ENCODE measurements at regions of chr6 and their contacts with region 1.

Region 1: GRCh38 chr6:150016324-150017185 is 8.8 kb downstream of the RAET1L start:
- DNase-seq: peak; percentile 70 to 83 (median 80)
- ATAC-seq: peak; percentile 91
- H3K4me3 ChIP-seq: no peak overlapping the region
- H3K27ac ChIP-seq: no peak overlapping the region
- H3K4me1 ChIP-seq: peaks cover 9% of the 10 kb centered on the region
- H3K27me3 ChIP-seq: peaks cover 0 to 19% of the 10 kb centered on the region in 2 donors
- CTCF ChIP-seq: peak; percentile 43 to 87 (median 78)
- POLR2A ChIP-seq: no peak

Region 2: GRCh38 chr6:149903938-149904611 is 112.5 kb before region 1 on chr6:
- intact Hi-C with region 1: no loop called
- DNase-seq: no peak
- ATAC-seq: no peak
- H3K4me3 ChIP-seq: no peak overlapping the region
- H3K27ac ChIP-seq: no peak overlapping the region
- H3K4me1 ChIP-seq: no peaks in the 10 kb centered on the region
- H3K27me3 ChIP-seq: no peaks in the 10 kb centered on the region
- CTCF ChIP-seq: no peak
- POLR2A ChIP-seq: no peak

Region 3: DNA sequence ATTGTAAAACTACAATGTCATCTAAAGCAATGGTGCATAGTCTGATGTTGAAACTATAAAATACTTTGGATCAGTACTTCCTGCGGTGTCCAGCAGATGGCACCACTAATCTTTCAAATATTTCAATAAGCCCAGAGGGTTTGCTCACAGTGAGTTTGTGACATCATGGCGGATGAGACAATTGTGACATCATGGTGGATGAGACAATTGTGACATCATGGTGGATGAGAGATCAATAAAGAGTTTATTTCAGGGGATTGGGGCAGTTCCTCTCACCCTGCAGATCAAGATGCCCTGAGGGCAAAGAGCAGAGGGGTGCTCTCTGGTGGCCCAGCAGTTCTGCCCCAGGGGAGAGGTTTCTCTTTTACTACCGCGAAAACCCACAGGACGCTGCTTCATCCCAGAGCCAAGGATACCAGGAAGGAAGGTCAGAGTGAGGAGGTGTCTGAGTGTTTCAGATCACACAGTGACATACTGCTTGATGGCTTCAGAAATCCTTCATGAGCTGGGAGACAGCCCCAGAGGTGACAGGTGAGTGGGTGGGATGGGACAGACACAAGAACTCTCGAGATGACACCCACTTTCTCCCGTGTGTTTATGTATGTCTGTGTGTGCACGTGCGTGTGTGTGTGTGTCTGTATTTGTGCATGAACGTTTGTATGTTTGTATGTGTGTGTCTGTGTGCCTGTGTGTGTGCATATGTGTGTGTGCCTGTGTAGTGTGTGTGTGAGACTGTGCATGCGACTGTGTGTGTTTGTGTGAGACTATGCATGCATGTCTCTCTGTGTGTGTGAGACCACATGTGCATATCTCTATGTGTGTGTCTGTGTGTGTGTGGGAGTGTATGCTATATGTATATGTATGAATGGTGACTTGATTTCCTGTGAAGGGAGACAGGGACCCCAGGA is 82.1 kb before region 1 on chr6:
- intact Hi-C with region 1: loop called (anchors 5 kb)
- DNase-seq: peak; percentile 72 to 78 (median 76)
- ATAC-seq: peak; percentile 78
- H3K4me3 ChIP-seq: no peak overlapping the region
- H3K27ac ChIP-seq: no peak overlapping the region
- H3K4me1 ChIP-seq: peaks cover 13% of the 10 kb centered on the region
- H3K27me3 ChIP-seq: peaks cover 0 to 32% of the 10 kb centered on the region in 2 donors
- CTCF ChIP-seq: peak; percentile 68 to 87 (median 82)
- POLR2A ChIP-seq: no peak

Measured in body of pancreas (tissue), 4 donors.